MCF 10A (cell line): ENCODE measurements at regions of chr3 and their contacts with region 1.

Region 1: GRCh38 chr3:107206141-107206540 is 171.1 kb upstream of the CCDC54 start:
- DNase-seq: peak; percentile 85
- H3K4me3 Mint-ChIP-seq: no peak overlapping the region
- H3K27ac Mint-ChIP-seq: no peak overlapping the region
- H3K4me1 Mint-ChIP-seq: peaks cover 42% of the 10 kb centered on the region
- H3K27me3 Mint-ChIP-seq: no peaks in the 10 kb centered on the region
- CTCF ChIP-seq: peak; percentile 57

Region 2: GRCh38 chr3:107216711-107217110 is 10.6 kb after region 1 on chr3:
- CTCF ChIA-PET with region 1: interaction called, 16 read pairs
- POLR2A ChIA-PET with region 1: interaction called, 56 read pairs
- intact Hi-C with region 1: no loop called
- DNase-seq: peak; percentile 95
- H3K4me3 Mint-ChIP-seq: peak overlapping the region; percentile 28
- H3K27ac Mint-ChIP-seq: peak overlapping the region; percentile 90
- H3K4me1 Mint-ChIP-seq: peaks cover 35% of the 10 kb centered on the region
- H3K27me3 Mint-ChIP-seq: no peaks in the 10 kb centered on the region
- CTCF ChIP-seq: no peak

Region 3: DNA sequence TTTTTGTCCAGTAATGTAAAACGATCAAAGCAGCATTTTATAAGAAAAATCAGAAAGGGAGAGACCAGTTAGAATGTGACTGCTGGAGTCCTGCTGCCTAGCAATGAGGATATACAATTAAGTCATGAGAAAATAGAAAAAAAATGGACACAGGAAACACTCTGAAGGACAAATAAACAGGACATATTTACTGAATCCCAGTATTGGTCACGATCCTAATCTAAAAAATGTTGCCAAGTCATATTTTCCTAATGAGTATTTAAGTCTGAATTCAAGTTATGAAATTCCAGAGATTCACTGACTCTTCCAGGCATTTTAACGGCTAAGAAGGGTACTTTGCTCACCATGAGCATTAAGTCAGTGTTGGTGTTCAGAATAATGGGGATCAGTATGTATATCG is 16.8 kb after region 1 on chr3:
- CTCF ChIA-PET with region 1: interaction called, 11 read pairs
- POLR2A ChIA-PET with region 1: interaction called, 56 read pairs
- intact Hi-C with region 1: no loop called
- DNase-seq: peak; percentile 53
- H3K4me3 Mint-ChIP-seq: no peak overlapping the region
- H3K27ac Mint-ChIP-seq: peak overlapping the region; percentile 88
- H3K4me1 Mint-ChIP-seq: peaks cover 40% of the 10 kb centered on the region
- H3K27me3 Mint-ChIP-seq: no peaks in the 10 kb centered on the region
- CTCF ChIP-seq: no peak

Region 4: DNA sequence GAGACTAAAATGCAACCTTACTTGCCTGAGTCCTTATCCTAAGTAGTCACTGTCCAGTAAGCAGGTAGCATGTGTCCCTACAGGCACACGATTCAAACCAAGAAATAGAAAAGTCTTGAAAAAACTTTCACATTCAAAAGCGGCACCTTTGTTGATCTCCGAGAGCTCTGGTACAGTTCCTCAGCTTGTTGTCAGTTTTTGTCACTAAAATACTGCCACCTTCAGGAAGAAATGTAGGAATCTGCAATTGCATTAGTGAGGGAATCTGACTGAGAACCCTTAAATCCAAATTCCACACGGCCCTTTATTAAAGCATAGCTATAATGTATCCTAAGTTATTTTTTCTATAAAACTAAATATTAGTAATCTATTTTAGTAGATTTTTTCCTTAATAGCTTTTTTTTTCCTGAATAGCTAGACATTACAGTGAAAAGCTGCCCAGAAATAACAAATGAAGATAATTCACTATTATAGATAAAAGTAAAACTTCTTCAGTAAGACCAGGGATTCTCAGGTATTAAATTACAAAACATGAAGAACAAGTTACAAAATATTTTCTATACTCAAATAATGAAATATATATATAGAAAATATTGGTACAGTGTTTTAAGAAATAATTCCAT is 215.1 kb after region 1 on chr3:
- CTCF ChIA-PET with region 1: interaction called, 9 read pairs
- POLR2A ChIA-PET with region 1: interaction called, 4 read pairs
- intact Hi-C with region 1: loop called (anchors 1 kb)
- DNase-seq: peak; percentile 81
- H3K4me3 Mint-ChIP-seq: peak overlapping the region; percentile 63
- H3K27ac Mint-ChIP-seq: peak overlapping the region; percentile 75
- H3K4me1 Mint-ChIP-seq: peaks cover 18% of the 10 kb centered on the region
- H3K27me3 Mint-ChIP-seq: no peaks in the 10 kb centered on the region
- CTCF ChIP-seq: peak; percentile 62

Region 5: DNA sequence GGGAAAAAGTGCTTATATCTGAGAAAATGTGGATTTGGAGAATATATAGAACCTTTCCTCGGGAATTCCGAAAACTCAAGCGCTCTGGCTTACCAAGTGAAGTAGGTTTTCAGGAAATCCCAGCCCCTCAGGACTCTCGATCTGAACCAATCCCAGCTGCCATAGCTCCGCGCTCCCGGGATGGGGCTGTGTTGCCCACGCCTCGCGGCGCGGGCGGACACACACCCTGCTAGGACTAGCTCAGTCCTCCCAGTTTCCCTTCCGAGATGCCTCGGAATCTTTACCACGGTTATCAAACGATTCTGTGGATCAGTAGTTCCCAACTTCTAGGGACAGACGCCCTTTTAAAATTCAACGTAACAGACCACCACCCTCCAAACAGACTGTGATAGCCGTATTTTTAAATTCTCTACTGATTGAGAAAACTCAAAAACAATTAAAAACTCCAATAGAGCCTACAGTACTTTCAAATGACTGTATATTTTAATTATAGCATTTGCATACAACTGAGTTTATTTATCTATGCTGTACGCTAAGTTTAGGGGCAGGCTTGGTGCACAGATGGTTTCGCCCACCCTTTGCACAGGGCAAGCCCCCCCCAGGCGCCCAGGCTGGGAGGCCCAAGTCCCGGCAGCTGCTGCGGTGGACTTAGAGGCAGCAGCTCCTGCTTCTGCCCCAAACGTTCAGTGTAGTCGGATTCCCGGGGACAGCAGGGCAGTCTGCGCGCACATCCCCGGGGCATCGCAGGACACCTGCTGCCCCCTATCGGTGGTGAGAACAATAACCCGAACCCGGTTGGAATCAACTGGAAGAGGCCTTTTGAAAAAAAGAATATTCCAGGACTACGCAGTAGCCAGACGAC is 223.4 kb after region 1 on chr3:
- CTCF ChIA-PET with region 1: interaction called, 6 read pairs
- POLR2A ChIA-PET with region 1: interaction called, 8 read pairs
- intact Hi-C with region 1: loop called (anchors 2 kb)
- DNase-seq: peak; percentile 82
- H3K4me3 Mint-ChIP-seq: peak overlapping the region; percentile 79
- H3K27ac Mint-ChIP-seq: no peak overlapping the region
- H3K4me1 Mint-ChIP-seq: peaks cover 7% of the 10 kb centered on the region
- H3K27me3 Mint-ChIP-seq: no peaks in the 10 kb centered on the region
- CTCF ChIP-seq: peak; percentile 79

Region 6: GRCh38 chr3:107476462-107476861 is 270.3 kb after region 1 on chr3:
- CTCF ChIA-PET with region 1: no interaction called
- POLR2A ChIA-PET with region 1: no interaction called
- intact Hi-C with region 1: no loop called
- DNase-seq: no peak
- H3K4me3 Mint-ChIP-seq: no peak overlapping the region
- H3K27ac Mint-ChIP-seq: no peak overlapping the region
- H3K4me1 Mint-ChIP-seq: no peaks in the 10 kb centered on the region
- H3K27me3 Mint-ChIP-seq: no peaks in the 10 kb centered on the region
- CTCF ChIP-seq: no peak

Region 7: GRCh38 chr3:107522510-107523288 is 316.6 kb after region 1 on chr3 and contains the start of gene BBX:
- CTCF ChIA-PET with region 1: no interaction called
- POLR2A ChIA-PET with region 1: interaction called, 5 read pairs
- intact Hi-C with region 1: loop called (anchors 10 kb)
- DNase-seq: peak; percentile 93
- H3K4me3 Mint-ChIP-seq: peak within 1 kb of the TSS; percentile 85
- H3K27ac Mint-ChIP-seq: peak within 1 kb of the TSS; percentile 93
- H3K4me1 Mint-ChIP-seq: peaks cover 14% of the 10 kb centered on the region
- H3K27me3 Mint-ChIP-seq: no peaks in the 10 kb centered on the region
- CTCF ChIP-seq: no peak
- total RNA-seq, gene BBX: 73.2 and 77.2 TPM in 2 replicates